ENCODE measurements at regions of chr12 and their contacts with region 1.

Region 1: GRCh38 chr12:57846577-57847319 is at the start of gene CTDSP2:
- DNase-seq: peak; percentile 99 to 100
- H3K4me3 ChIP-seq: peak within 1 kb of the TSS; percentile 94 to 96
- H3K27ac ChIP-seq: peak within 1 kb of the TSS; percentile 98 to 100
- H3K4me1 ChIP-seq: peaks cover 12 to 44% of the 10 kb centered on the region in 2 donors
- H3K27me3 ChIP-seq: no peaks in the 10 kb centered on the region
- CTCF ChIP-seq: no peak
- total RNA-seq, gene CTDSP2: 129 TPM

Region 2: DNA sequence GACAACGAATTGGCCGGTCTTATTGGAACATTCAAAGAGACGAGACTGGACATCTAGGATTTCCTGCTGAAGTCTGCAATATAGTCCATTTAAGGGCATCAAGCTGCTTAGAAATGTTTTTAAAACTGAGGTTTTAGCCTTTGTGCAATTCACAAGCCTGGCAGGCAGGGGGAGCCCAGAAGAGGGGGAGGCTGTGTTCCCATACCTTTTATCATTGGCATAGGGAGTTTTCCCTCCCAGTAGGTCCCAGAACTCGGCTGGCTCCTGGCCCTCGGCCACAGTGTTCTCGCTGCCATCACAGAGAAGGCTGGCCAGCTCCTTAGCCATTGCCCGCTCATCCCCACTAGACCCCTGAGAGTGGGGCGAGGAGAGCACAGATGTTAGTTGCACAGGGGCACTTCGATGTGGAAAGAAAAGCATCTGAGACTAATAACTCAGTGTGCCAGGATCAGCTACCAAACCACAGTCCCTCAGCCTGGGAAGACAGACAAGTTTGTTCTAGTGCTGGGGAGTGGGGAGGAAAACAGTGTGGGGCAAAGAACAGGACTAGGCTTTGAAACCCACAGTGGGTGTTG is 43.3 kb before region 1 on chr12:
- intact Hi-C with region 1: loop called (anchors 5 kb)
- DNase-seq: no peak
- H3K4me3 ChIP-seq: no peak overlapping the region
- H3K27ac ChIP-seq: peak overlapping the region; percentile 25 to 40
- H3K4me1 ChIP-seq: peaks cover 3 to 4% of the 10 kb centered on the region in 2 donors
- H3K27me3 ChIP-seq: no peaks in the 10 kb centered on the region
- CTCF ChIP-seq: peak; percentile 76 to 79 (median 78)

Region 3: GRCh38 chr12:57865090-57865751 is 18.5 kb after region 1 on chr12:
- intact Hi-C with region 1: loop called (anchors 1 kb)
- DNase-seq: peak; percentile 53 to 94
- H3K4me3 ChIP-seq: peak overlapping the region; percentile 54 to 71
- H3K27ac ChIP-seq: peak overlapping the region; percentile 94 to 96
- H3K4me1 ChIP-seq: peaks cover 13 to 39% of the 10 kb centered on the region in 2 donors
- H3K27me3 ChIP-seq: no peaks in the 10 kb centered on the region
- CTCF ChIP-seq: no peak

Region 4: GRCh38 chr12:57888409-57889157 is 41.8 kb after region 1 on chr12:
- intact Hi-C with region 1: loop called (anchors 2 kb)
- DNase-seq: peak in 1 of 2 donors; percentile 85
- H3K4me3 ChIP-seq: peak overlapping the region; percentile 11 to 54
- H3K27ac ChIP-seq: peak overlapping the region; percentile 98 to 99
- H3K4me1 ChIP-seq: peaks cover 39 to 67% of the 10 kb centered on the region in 2 donors
- H3K27me3 ChIP-seq: no peaks in the 10 kb centered on the region
- CTCF ChIP-seq: no peak

Region 5: GRCh38 chr12:57896434-57897201 is 49.9 kb after region 1 on chr12:
- intact Hi-C with region 1: loop called (anchors 1 kb)
- DNase-seq: peak in 1 of 2 donors; percentile 87
- H3K4me3 ChIP-seq: peak overlapping the region; percentile 67 to 72
- H3K27ac ChIP-seq: peak overlapping the region; percentile 98 to 99
- H3K4me1 ChIP-seq: peaks cover 51 to 69% of the 10 kb centered on the region in 2 donors
- H3K27me3 ChIP-seq: no peaks in the 10 kb centered on the region
- CTCF ChIP-seq: peak in 2 of 3 experiments; percentile 29 to 67

Region 6: DNA sequence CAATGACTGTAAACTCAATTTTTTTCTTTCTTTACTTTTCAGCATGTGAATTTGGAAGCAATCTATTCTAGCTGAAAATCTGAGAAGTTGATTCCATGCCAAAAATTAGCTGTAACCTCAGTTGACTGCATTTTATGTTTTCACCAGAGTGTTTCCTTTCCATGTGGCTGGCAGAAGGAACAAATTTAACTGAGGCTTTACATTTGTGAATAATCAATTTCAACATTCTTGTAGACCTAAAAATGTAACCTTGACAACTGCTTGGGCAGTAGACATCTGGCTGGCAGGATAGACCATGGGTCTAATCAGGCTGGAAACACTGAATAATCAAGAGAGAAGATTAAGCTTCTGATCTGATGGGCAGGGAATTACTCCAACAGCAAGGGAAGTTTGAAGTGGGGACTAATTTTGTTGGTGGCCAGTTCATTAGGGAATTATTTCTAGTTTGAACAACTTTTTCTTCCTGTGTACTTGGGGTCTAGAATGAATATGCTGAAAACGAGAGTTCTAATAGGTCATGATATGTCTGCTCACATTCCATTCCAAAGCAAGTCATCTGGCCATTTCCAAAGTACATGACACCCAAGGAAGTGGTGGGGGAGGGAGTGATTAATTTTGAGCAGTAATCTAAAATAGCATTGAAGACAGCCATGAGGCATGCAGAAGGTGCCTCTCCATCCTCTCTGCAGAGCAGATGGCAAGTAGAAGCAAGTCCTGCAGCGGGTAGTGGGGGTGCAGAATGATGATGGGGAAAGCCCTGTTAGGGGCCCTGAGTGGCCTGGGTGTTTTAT is 162.9 kb after region 1 on chr12:
- intact Hi-C with region 1: no loop called
- DNase-seq: no peak
- H3K4me3 ChIP-seq: no peak overlapping the region
- H3K27ac ChIP-seq: no peak overlapping the region
- H3K4me1 ChIP-seq: no peaks in the 10 kb centered on the region
- H3K27me3 ChIP-seq: no peaks in the 10 kb centered on the region
- CTCF ChIP-seq: no peak

Measured in ascending aorta (tissue), 2 donors.